B cell (primary cell): ENCODE measurements at regions of chr1 and their contacts with region 1.

Region 1: DNA sequence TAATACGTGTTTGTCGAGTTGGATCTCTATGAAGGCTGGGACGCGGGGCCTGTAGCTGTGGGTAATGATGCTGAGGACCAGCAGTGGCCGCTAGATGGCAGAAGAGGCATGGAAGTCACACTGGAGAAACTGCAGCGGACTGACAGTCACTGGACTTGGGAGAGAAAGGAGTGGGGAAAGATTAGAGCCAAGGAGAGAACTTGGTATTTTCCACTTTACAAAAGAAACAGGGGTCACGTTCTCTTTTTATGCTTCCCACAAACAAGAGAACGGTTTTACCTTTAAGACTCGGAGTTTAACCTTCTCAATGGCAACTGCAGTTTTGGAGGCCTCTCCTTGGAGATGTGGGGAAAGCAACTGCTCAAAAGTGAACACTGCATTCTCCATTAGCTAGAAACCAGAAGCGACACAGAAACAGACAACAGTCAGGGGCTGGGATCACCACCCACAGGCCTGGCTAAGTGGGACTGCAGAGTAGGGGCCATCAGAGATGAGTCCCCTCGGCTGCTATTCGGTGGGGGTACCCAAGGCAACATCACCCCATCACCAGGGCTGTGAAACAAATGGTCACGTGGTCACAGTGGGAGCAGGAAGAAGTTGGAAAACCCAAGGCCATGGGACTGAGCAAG is 51.1 kb upstream of the EDEM3 start:
- DNase-seq: peak; percentile 86
- ATAC-seq: peak; percentile 94
- H3K4me3 ChIP-seq: no peak overlapping the region
- H3K4me3 Mint-ChIP-seq: no peak overlapping the region
- H3K27ac ChIP-seq: no peak overlapping the region
- H3K27ac Mint-ChIP-seq: no peak overlapping the region
- H3K4me1 ChIP-seq: peaks cover 0 to 11% of the 10 kb centered on the region in 2 donors
- H3K4me1 Mint-ChIP-seq: peaks cover 9% of the 10 kb centered on the region
- H3K27me3 ChIP-seq: no peaks in the 10 kb centered on the region
- H3K27me3 Mint-ChIP-seq: no peaks in the 10 kb centered on the region
- CTCF ChIP-seq: peak; percentile 97

Region 2: DNA sequence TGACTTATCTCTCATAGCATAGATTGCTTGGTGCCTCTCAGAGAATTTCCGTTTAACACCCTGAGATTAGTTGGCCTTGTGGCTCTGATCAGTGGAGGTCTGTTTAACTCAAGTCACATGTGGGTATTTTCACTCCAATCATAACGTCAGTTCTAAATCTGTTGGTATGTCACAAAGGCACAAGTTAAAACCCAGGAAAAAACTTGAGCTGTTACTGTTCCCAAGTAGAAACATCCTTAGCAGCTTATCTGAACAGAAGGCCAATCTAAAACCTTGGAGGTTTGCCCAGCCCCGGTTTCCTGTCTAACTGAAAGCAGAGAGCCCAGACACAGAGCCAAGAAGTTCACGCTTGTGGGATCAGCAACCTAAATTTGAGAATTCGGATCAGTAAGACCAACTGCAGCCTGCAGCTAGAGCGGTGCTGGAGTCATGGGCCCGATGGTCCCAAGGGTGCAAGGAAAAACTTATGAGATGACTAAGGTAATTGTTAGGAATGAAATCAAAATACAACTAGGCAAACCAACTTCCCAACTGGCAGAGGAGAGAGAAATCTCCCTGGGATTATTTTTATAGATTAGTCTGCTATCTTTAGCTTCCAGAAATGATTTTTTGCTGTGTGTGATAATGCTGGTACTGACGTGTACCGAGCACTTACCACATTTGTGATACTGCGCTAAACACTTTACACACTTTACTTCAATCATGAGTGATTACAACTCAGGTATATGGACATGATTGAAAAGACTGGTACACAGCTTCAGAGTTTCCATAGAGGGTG is 509.1 kb before region 1 on chr1:
- CTCF ChIA-PET with region 1: no interaction called
- POLR2A ChIA-PET with region 1: no interaction called
- intact Hi-C with region 1: no loop called
- DNase-seq: no peak
- ATAC-seq: no peak
- H3K4me3 ChIP-seq: no peak overlapping the region
- H3K4me3 Mint-ChIP-seq: no peak overlapping the region
- H3K27ac ChIP-seq: no peak overlapping the region
- H3K27ac Mint-ChIP-seq: no peak overlapping the region
- H3K4me1 ChIP-seq: no peaks in the 10 kb centered on the region
- H3K4me1 Mint-ChIP-seq: no peaks in the 10 kb centered on the region
- H3K27me3 ChIP-seq: peaks cover 0 to 3% (median 0%) of the 10 kb centered on the region in 4 experiments
- H3K27me3 Mint-ChIP-seq: peaks cover 7% of the 10 kb centered on the region
- CTCF ChIP-seq: no peak

Region 3: DNA sequence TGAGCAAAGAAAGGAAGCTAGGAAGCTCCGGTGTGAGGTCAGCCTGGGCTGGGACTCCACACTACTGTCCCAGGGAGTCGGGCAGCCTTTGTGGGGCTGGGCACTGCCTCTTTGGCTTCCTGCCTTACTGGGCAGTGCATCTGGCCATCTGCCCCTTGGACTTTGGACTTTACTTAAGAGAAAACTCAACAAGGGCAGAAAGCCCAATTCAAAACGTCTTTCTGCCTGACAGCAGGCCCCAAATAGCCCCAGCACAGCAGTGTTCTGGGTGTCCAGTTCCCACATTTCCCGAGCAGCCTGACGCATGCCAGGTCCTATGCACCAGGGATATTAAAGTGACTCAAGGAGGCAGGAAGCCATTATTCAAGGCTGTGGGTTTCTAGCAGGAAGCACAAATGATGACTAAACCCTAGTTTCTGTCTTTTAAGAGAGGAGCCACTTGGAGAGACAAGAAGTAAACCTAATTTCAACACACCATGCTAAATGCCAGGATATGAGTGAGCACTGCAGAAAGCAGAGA is 13.3 kb before region 1 on chr1:
- CTCF ChIA-PET with region 1: interaction called, 11 read pairs
- POLR2A ChIA-PET with region 1: no interaction called
- intact Hi-C with region 1: no loop called
- DNase-seq: no peak
- ATAC-seq: no peak
- H3K4me3 ChIP-seq: no peak overlapping the region
- H3K4me3 Mint-ChIP-seq: no peak overlapping the region
- H3K27ac ChIP-seq: no peak overlapping the region
- H3K27ac Mint-ChIP-seq: no peak overlapping the region
- H3K4me1 ChIP-seq: no peaks in the 10 kb centered on the region
- H3K4me1 Mint-ChIP-seq: no peaks in the 10 kb centered on the region
- H3K27me3 ChIP-seq: no peaks in the 10 kb centered on the region
- H3K27me3 Mint-ChIP-seq: no peaks in the 10 kb centered on the region
- CTCF ChIP-seq: no peak

Region 4: GRCh38 chr1:184965944-184966860 is 160.4 kb after region 1 on chr1:
- CTCF ChIA-PET with region 1: interaction called, 10 read pairs
- POLR2A ChIA-PET with region 1: no interaction called
- intact Hi-C with region 1: no loop called
- DNase-seq: no peak
- ATAC-seq: no peak
- H3K4me3 ChIP-seq: no peak overlapping the region
- H3K4me3 Mint-ChIP-seq: no peak overlapping the region
- H3K27ac ChIP-seq: no peak overlapping the region
- H3K27ac Mint-ChIP-seq: no peak overlapping the region
- H3K4me1 ChIP-seq: no peaks in the 10 kb centered on the region
- H3K4me1 Mint-ChIP-seq: peaks cover 21% of the 10 kb centered on the region
- H3K27me3 ChIP-seq: no peaks in the 10 kb centered on the region
- H3K27me3 Mint-ChIP-seq: no peaks in the 10 kb centered on the region
- CTCF ChIP-seq: no peak

Region 5: DNA sequence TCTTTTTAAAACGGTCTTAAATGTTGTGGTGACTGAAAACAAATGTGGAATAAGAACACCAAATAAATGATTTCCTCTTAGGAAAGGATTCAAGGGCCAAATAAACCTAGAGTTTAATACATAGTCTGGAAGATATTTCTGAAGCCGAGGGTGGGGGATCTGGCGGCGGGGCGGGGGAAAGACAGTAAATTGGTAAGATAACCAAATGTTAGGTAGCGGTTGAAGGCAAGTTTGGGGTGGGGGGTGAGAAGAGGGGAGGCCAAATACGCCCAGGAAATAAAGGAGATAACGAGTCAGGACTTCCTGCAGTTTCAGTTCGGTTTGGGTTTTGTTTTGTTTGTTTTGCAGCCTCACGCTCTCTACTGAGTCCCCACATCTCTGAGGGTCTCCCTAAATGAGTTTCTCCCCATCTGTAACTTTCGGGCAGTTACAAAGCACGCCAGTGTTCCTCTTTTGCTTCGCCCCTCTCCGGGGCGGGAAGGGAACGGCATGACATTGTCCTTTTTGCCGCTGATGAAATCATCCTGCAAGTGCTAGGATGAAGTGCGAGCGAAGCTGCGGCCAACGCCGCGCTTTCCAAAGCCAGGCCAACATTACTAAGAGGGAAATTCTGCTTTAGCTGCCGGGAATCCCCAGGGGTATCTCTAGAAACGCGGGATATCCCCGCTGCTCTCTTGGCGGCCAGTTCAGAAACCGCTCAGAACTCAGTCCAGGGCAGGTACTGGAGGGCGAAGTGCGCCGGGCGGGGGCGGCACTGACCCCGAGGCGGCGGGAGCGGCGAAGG is 167.7 kb after region 1 on chr1:
- CTCF ChIA-PET with region 1: interaction called, 72 read pairs
- POLR2A ChIA-PET with region 1: no interaction called
- intact Hi-C with region 1: no loop called
- DNase-seq: peak; percentile 69
- ATAC-seq: peak; percentile 39
- H3K4me3 ChIP-seq: peak overlapping the region; percentile 57 to 85 (median 61)
- H3K4me3 Mint-ChIP-seq: peak overlapping the region; percentile 96
- H3K27ac ChIP-seq: peak overlapping the region; percentile 21 to 54
- H3K27ac Mint-ChIP-seq: peak overlapping the region; percentile 85
- H3K4me1 ChIP-seq: peaks cover 5 to 17% of the 10 kb centered on the region in 2 donors
- H3K4me1 Mint-ChIP-seq: peaks cover 40% of the 10 kb centered on the region
- H3K27me3 ChIP-seq: peaks cover 0 to 11% (median 9%) of the 10 kb centered on the region in 4 experiments
- H3K27me3 Mint-ChIP-seq: peaks cover 10% of the 10 kb centered on the region
- CTCF ChIP-seq: no peak

Region 6: DNA sequence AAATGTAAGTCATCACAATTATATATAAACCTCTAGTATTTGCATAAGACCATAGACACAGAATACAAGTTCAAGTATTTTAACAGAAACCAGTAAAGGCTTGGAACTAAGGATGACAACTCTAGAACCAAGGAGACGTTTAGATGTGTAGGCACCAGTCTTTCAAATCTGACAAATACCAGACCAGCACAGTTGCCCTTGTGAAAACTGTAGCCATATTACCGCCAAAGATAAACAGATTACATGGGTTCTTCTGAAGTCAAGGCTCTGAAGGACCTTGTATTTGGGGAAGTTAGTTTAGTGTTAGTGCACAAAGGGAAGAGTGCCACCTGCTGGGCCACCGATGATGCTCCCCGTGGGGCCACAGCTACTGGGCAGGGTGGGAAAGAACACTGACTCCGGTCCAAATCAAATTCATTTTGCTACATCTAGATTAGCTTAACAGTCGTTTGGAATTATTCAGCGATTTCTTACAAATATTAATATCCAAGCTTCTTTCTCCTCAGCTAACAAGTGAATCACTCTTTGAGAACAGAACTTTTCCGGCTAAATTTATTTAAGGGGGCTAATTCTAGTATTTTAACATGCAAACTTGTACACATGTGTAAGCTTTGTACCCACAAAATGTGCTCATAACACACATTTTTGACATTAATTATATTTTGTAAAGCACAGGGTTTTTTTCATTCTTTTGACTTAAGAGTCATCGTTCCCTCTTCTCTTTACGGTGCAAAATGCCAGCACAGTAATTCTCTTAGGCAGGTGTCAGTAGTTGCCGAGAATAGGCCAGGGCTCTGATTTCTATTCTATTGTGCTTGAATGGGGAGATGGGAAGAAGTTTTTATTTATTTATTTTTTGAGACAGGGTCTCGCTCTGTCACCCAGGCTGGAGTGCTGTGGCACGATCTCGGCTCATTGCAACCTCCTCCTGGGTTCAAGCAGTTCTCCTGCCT is 176.5 kb after region 1 on chr1:
- CTCF ChIA-PET with region 1: interaction called, 188 read pairs
- POLR2A ChIA-PET with region 1: no interaction called
- intact Hi-C with region 1: loop called (anchors 1 kb)
- DNase-seq: peak; percentile 80
- ATAC-seq: peak; percentile 98
- H3K4me3 ChIP-seq: no peak overlapping the region
- H3K4me3 Mint-ChIP-seq: no peak overlapping the region
- H3K27ac ChIP-seq: no peak overlapping the region
- H3K27ac Mint-ChIP-seq: no peak overlapping the region
- H3K4me1 ChIP-seq: peaks cover 0 to 3% of the 10 kb centered on the region in 2 donors
- H3K4me1 Mint-ChIP-seq: peaks cover 2% of the 10 kb centered on the region
- H3K27me3 ChIP-seq: no peaks in the 10 kb centered on the region
- H3K27me3 Mint-ChIP-seq: peaks cover 11% of the 10 kb centered on the region
- CTCF ChIP-seq: peak; percentile 93

Region 7: DNA sequence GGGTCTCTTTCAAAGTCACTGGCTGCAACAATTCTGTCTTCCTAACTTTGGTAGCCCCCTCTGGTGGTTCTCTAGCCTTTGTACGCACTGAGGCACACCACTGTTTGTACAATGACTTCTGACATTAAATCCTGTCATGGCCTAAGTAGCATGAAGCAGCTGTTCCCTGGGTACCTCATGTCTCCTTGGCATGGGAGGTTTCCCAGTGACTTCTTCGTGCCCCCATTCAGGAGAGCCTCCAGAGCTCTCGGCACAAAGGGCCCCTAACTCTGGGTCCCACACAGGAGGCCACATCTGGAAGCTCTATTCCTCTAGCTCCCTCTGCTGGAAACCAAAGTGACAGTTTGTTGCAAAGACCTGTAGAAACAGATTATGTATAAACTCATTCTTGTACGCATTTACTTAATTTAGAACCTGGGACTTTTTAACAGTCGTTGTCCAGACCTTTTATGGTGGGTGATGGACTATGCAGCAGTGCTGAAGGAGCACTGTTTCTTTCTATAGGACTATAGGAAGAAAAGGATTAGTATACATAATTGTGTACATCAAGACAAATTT is 364.6 kb after region 1 on chr1:
- CTCF ChIA-PET with region 1: interaction called, 81 read pairs
- POLR2A ChIA-PET with region 1: interaction called, 4 read pairs
- intact Hi-C with region 1: loop called (anchors 1 kb)
- DNase-seq: peak; percentile 79
- ATAC-seq: peak; percentile 81
- H3K4me3 ChIP-seq: no peak overlapping the region
- H3K4me3 Mint-ChIP-seq: no peak overlapping the region
- H3K27ac ChIP-seq: peak overlapping the region in 1 of 2 donors; percentile 3
- H3K27ac Mint-ChIP-seq: no peak overlapping the region
- H3K4me1 ChIP-seq: peaks cover 0 to 6% of the 10 kb centered on the region in 2 donors
- H3K4me1 Mint-ChIP-seq: peaks cover 4% of the 10 kb centered on the region
- H3K27me3 ChIP-seq: no peaks in the 10 kb centered on the region
- H3K27me3 Mint-ChIP-seq: no peaks in the 10 kb centered on the region
- CTCF ChIP-seq: peak; percentile 84

Region 8: DNA sequence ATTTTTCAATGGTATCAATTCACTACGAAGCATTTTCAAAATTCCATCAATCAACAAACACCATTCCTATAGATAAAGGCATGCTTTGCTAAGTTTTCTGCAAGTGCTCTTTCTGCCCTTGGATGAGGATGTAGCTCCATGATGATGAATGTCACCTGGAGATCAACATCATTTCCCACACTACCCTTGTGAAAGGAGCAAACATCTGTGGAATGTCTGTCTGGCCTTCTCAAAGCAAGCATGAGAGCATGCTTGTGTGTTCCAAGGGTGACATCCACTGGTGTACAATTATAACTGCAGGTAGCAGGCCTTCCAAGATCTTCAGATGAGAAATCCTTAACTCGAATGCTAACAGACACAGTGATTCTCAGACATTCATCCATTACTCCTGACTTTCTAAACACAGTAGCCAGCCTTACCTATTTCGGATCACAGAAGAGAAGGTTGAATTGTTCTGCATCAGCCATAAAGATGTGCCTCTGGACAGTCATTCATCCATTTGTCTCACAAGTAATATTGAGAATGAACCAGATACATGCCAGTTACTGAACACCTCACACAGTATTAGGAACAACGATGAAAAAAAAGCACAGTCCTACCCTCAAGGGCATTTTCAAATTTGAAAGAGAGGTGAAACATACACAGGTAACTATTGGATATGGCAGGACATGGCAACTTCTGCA is 1406.9 kb after region 1 on chr1:
- CTCF ChIA-PET with region 1: no interaction called
- POLR2A ChIA-PET with region 1: no interaction called
- intact Hi-C with region 1: loop called (anchors 10 kb)
- DNase-seq: peak; percentile 50
- ATAC-seq: peak; percentile 45
- H3K4me3 ChIP-seq: no peak overlapping the region
- H3K4me3 Mint-ChIP-seq: no peak overlapping the region
- H3K27ac ChIP-seq: no peak overlapping the region
- H3K27ac Mint-ChIP-seq: no peak overlapping the region
- H3K4me1 ChIP-seq: no peaks in the 10 kb centered on the region
- H3K4me1 Mint-ChIP-seq: no peaks in the 10 kb centered on the region
- H3K27me3 ChIP-seq: no peaks in the 10 kb centered on the region
- H3K27me3 Mint-ChIP-seq: peaks cover 10% of the 10 kb centered on the region
- CTCF ChIP-seq: peak; percentile 72